Activated CD8-positive, alpha-beta T cell treated with anti-CD3 and anti-CD28 coated beads for 36 hours (primary cell): ENCODE measurements at regions of chrX and their contacts with region 1.

Region 1: DNA sequence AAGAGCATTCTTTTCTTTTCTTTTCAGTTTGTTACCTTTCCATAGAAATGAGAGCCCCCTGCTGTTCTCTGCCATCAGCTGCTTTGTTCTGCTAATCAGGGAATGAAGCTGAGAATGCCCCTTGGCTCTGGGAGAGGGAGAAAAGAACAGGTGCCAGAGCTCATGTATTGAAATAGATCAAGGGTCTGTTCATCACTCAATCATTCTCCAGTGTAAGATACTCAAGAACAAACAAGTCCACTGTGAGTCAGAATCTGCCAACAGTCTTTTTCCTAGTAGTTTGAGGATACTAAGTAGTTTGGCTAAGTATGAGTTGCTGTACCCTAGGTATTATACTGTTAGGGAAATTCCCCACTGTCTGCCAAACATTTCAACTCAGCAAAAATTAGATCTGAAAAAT is 144.3 kb downstream of the RTL3 start:
- DNase-seq: no peak
- ATAC-seq: peak; percentile 74
- H3K4me3 Mint-ChIP-seq: no peak overlapping the region
- H3K27ac Mint-ChIP-seq: peak overlapping the region; percentile 95
- H3K4me1 Mint-ChIP-seq: peaks cover 53% of the 10 kb centered on the region
- H3K27me3 Mint-ChIP-seq: no peaks in the 10 kb centered on the region
- CTCF ChIP-seq: no peak

Region 2: DNA sequence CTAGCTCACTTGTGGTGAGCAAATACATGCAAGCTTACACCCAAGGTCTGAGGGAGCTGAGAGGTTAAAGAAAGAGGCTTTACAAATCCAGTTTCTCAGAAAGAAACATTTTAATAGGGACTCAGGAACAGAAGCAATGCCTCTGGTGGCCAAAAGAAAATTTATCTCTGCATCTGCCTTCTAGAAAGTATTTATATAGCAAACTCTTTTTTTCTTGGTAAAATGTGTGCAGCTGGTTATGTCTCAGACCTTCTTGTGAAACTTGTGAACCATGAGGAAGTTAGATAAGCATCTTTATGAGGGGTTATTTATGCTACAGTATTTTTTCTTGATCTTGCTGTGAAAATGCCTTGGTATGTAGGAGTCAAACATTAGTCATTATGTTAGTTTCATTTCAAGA is 139.0 kb before region 1 on chrX:
- CTCF ChIA-PET with region 1: no interaction called
- POLR2A ChIA-PET with region 1: no interaction called
- intact Hi-C with region 1: loop called (anchors 2 kb)
- DNase-seq: peak; percentile 4
- ATAC-seq: peak; percentile 81
- H3K4me3 Mint-ChIP-seq: no peak overlapping the region
- H3K27ac Mint-ChIP-seq: peak overlapping the region; percentile 34
- H3K4me1 Mint-ChIP-seq: peaks cover 29% of the 10 kb centered on the region
- H3K27me3 Mint-ChIP-seq: no peaks in the 10 kb centered on the region
- CTCF ChIP-seq: peak; percentile 36

Region 3: GRCh38 chrX:78619834-78620233 is 105.0 kb after region 1 on chrX:
- CTCF ChIA-PET with region 1: no interaction called
- POLR2A ChIA-PET with region 1: no interaction called
- intact Hi-C with region 1: no loop called
- DNase-seq: no peak
- ATAC-seq: no peak
- H3K4me3 Mint-ChIP-seq: no peak overlapping the region
- H3K27ac Mint-ChIP-seq: no peak overlapping the region
- H3K4me1 Mint-ChIP-seq: no peaks in the 10 kb centered on the region
- H3K27me3 Mint-ChIP-seq: no peaks in the 10 kb centered on the region
- CTCF ChIP-seq: no peak